ENCODE measurements at regions of chr12 and their contacts with region 1.

Region 1: GRCh38 chr12:47356129-47356700 is 276.5 kb upstream of the AMIGO2 start:
- DNase-seq: peak; percentile 61
- ATAC-seq: peak; percentile 74
- H3K4me3 Mint-ChIP-seq: peak overlapping the region; percentile 58
- H3K27ac Mint-ChIP-seq: peak overlapping the region; percentile 100
- H3K4me1 Mint-ChIP-seq: peaks cover 86% of the 10 kb centered on the region
- H3K27me3 Mint-ChIP-seq: no peaks in the 10 kb centered on the region

Region 2: GRCh38 chr12:47216150-47216677 is 140.0 kb before region 1 on chr12:
- CTCF ChIA-PET with region 1: interaction called, 5 read pairs
- POLR2A ChIA-PET with region 1: interaction called, 3 read pairs
- intact Hi-C with region 1: loop called (anchors 1 to 2 kb)
- DNase-seq: peak; percentile 81
- ATAC-seq: peak; percentile 43
- H3K4me3 Mint-ChIP-seq: peak overlapping the region; percentile 89
- H3K27ac Mint-ChIP-seq: peak overlapping the region; percentile 96
- H3K4me1 Mint-ChIP-seq: peaks cover 38% of the 10 kb centered on the region
- H3K27me3 Mint-ChIP-seq: no peaks in the 10 kb centered on the region

Region 3: DNA sequence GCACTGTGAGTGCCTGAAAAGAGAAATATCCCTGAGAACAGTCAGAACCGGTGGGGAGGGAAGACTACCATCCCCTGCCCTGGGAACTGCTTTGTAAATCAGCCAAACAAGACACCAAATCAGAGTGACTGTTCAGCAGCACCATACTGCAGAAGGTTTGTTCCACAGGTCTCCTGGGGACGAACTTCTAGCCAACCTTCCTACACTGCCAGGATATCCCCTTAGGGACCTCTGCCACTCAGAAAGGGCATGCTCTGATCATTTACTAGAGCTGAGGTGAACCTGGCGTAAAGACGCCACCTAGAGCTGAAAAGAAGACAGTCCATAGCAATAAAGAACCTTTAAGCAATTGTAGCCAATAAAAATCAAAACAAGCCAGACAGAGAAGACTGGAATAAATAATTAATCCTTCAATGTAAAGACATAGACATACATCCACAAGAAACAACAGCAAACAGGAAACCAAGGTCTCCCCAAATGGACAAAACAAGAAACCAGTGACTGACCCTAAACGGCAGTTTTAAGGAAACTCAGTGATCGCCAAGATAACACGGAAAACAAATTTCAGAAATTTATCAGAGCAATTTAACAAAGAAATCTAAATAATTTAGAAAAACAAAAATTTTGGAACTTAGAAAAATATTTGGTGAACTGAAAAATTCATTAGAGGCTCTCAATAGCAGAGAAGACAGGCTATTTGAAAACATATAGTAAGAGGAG is 48.4 kb before region 1 on chr12:
- CTCF ChIA-PET with region 1: interaction called, 7 read pairs
- POLR2A ChIA-PET with region 1: no interaction called
- intact Hi-C with region 1: loop called in 1 of 2 experiments (anchors 2 kb)
- DNase-seq: peak; percentile 73
- ATAC-seq: peak; percentile 84
- H3K4me3 Mint-ChIP-seq: peak overlapping the region; percentile 77
- H3K27ac Mint-ChIP-seq: peak overlapping the region; percentile 96
- H3K4me1 Mint-ChIP-seq: peaks cover 70% of the 10 kb centered on the region
- H3K27me3 Mint-ChIP-seq: no peaks in the 10 kb centered on the region

Region 4: DNA sequence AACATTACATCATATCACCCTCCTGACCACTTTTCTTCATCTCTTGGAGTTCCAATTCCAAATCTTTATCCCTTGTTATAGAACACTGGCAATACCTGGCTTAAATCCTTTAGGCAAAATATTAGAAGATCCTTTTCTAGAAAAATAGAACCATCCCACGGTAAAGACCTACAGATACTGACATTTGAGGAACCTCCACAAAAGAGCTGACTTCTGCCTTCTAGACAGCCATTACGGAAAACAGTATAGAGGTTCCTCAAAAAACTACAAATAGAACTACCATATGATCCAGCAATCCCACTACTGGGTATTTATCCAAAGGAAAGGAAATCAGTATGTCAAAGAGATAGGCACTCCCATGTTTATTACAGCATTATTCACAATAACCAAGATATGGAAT is 34.8 kb before region 1 on chr12:
- CTCF ChIA-PET with region 1: interaction called, 3 read pairs
- POLR2A ChIA-PET with region 1: no interaction called
- intact Hi-C with region 1: loop called in 1 of 2 experiments (anchors 5 kb)
- DNase-seq: no peak
- ATAC-seq: no peak
- H3K4me3 Mint-ChIP-seq: no peak overlapping the region
- H3K27ac Mint-ChIP-seq: no peak overlapping the region
- H3K4me1 Mint-ChIP-seq: peaks cover 30% of the 10 kb centered on the region
- H3K27me3 Mint-ChIP-seq: no peaks in the 10 kb centered on the region

Region 5: DNA sequence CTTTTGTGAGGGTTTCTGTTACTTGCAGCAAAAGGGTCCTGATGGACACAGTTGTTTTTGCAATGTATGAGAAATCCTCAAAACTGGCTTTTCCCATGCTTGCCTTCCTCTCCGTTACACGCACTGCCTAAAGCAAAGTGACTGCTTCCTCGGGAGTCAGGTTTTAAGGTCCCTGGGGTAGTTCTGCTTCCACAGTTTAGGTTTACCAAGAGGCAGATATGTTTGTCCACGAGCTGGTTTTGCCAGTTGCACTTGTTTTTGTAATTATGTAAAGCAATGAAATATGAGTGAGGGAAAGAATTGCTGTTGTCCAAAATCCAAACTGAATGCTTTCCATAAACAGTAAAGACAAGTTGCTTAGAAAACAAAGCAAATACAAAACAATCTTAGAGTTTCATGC is 14.2 kb after region 1 on chr12:
- CTCF ChIA-PET with region 1: no interaction called
- POLR2A ChIA-PET with region 1: no interaction called
- intact Hi-C with region 1: no loop called
- DNase-seq: no peak
- ATAC-seq: no peak
- H3K4me3 Mint-ChIP-seq: no peak overlapping the region
- H3K27ac Mint-ChIP-seq: no peak overlapping the region
- H3K4me1 Mint-ChIP-seq: peaks cover 10% of the 10 kb centered on the region
- H3K27me3 Mint-ChIP-seq: no peaks in the 10 kb centered on the region

Region 6: GRCh38 chr12:47419497-47419896 is 63.3 kb after region 1 on chr12:
- CTCF ChIA-PET with region 1: no interaction called
- POLR2A ChIA-PET with region 1: interaction called, 4 read pairs
- intact Hi-C with region 1: loop called in 1 of 2 experiments (anchors 1 kb)
- DNase-seq: no peak
- ATAC-seq: peak; percentile 93
- H3K4me3 Mint-ChIP-seq: no peak overlapping the region
- H3K27ac Mint-ChIP-seq: peak overlapping the region; percentile 56
- H3K4me1 Mint-ChIP-seq: peaks cover 56% of the 10 kb centered on the region
- H3K27me3 Mint-ChIP-seq: no peaks in the 10 kb centered on the region

Measured in activated CD4-positive, alpha-beta T cell treated with anti-CD3 and anti-CD28 coated beads for 36 hours (primary cell).